AG04449 (cell line): ENCODE measurements at regions of chr10 and their contacts with region 1.

Region 1: GRCh38 chr10:96513698-96514561 is at the start of gene TLL2:
- DNase-seq: peak; percentile 26
- H3K4me3 ChIP-seq: peak within 1 kb of the TSS; percentile 61
- CTCF ChIP-seq: peak; percentile 76

Region 2: DNA sequence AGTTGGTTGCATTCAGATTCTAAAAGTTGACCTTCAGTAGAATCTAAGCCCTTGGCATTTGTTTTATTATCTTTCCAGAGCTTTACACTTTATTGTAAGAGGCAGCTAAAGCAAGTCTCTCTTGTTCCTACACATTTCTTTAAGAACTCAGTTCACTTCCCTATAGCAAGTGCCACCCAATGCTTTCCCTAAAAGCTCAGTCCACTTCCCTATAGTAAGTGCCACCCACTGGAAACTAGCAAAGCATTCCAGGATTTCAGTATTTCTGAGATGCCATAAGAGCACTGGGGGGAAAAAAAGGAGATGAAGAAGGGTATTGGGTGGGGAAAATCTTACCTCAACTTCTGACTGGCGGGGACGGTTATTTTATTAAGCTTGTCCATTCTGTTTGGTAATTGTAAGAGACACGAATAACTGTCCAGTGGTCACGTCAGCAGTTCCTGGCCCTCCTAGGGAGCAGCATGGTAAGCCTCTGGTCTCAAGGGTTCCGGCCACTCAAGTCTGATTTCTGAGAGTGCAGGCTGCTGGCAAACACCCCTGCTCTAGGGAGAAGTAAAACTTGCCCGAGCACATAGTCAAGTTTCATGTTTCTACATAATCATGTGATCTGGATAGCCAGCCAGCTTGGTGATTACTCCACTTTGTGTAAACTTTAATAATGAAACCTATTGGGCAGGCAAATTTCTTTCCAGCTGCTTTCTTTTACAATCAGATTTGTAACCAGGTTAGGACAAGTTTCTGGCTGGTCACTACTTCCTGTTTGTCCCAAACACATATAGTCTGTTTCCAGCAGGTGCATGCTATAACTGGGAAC is 242.7 kb before region 1 on chr10 and contains the start of gene BLNK:
- CTCF ChIA-PET with region 1: no interaction called
- POLR2A ChIA-PET with region 1: no interaction called
- DNase-seq: no peak
- H3K4me3 ChIP-seq: no peak within 1 kb of the TSS
- CTCF ChIP-seq: no peak

Region 3: GRCh38 chr10:96357038-96357620 is 156.8 kb before region 1 on chr10:
- CTCF ChIA-PET with region 1: no interaction called
- POLR2A ChIA-PET with region 1: no interaction called
- DNase-seq: no peak
- H3K4me3 ChIP-seq: no peak overlapping the region
- CTCF ChIP-seq: no peak

Region 4: DNA sequence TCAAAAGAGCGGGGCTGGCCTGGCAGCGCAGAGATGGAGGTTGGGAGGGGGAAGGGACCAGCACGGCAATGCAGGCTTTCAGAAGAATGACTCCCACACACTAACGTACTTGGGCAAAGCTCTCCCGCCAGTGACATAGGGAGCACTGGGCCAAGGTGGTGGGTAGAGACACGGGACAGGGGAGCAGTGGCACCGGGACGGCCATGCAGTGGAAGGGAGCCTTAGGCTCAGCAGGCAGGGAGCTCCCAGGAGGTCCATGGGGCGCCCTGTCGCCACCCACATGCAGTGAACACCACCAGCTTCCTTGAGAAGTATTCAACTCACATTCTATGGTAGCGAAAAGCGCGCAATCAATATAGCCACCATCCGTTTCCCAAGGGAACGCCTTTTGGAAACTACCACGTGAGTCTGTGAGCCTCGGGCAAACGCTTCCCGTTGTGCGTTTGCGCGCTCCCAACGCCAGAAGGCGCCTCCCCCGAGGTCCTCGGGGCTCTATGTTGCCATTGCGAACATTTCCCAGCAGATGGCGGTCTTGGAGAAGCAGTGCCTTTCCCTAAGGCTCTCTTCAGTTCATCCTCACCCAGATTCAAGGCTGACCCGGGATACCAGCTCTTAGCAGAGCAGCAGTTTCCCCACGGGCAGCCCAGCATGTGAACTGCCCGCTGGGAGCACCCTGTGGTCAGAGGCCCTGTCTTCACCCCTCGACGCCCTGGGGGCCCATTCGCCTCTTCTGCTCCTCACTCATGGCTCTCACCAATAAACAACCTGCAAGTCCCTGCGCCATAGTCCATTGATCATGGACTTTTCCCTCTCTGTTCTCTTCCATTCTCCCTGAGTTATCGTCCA is 138.7 kb before region 1 on chr10:
- CTCF ChIA-PET with region 1: interaction called, 253 read pairs
- POLR2A ChIA-PET with region 1: interaction called, 4 read pairs
- DNase-seq: no peak
- H3K4me3 ChIP-seq: peak overlapping the region; percentile 58
- CTCF ChIP-seq: peak; percentile 97

Region 5: DNA sequence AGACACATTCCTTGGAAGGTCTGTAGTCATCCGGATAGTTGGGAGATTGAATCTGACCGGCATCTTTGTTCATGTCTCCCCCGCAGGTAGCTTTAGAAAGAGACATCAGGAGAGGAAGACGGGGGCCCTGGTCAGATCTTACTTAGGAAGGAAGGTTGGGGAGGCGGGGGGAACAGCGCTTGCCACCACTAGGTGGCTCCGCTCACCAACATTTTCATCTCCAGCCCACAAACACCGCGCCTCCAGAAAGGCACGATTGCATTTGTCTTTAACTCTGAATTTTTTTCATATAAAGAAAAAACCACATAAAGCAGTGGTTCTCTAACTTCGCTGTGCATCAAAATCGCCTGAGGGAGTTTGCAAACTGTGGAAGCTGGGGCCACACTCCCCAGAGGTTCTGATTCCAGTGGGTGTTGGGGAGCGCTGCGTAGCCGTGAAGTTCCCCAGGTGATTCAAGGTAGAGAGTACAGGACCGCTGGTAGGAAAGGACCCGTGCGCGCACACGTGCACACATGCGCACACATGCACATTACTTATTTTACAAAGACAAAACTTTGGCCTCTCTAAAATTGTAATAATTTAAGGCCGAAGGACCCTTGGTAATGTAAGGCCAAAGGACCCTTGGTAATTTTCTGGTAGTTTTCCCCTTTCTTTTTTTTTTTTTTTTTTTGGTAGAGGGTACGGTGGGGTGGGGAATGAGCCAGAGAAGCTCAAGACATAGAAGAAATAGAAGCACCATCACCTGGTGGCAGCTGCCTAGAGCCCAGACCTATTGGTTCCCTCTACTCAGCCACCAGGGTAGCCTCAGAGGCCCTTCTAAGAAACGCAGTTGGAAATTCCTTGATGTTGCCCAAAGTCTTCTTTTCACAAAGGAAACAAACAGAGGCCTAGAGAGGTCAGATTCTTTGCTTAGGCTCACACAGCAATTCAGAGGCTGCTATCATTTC is 117.7 kb before region 1 on chr10:
- CTCF ChIA-PET with region 1: interaction called, 137 read pairs
- POLR2A ChIA-PET with region 1: no interaction called
- DNase-seq: no peak
- H3K4me3 ChIP-seq: no peak overlapping the region
- CTCF ChIP-seq: peak; percentile 82

Region 6: GRCh38 chr10:96496281-96496925 is 17.5 kb before region 1 on chr10:
- CTCF ChIA-PET with region 1: interaction called, 45 read pairs
- POLR2A ChIA-PET with region 1: interaction called, 3 read pairs
- DNase-seq: no peak
- H3K4me3 ChIP-seq: no peak overlapping the region
- CTCF ChIP-seq: no peak

Region 7: DNA sequence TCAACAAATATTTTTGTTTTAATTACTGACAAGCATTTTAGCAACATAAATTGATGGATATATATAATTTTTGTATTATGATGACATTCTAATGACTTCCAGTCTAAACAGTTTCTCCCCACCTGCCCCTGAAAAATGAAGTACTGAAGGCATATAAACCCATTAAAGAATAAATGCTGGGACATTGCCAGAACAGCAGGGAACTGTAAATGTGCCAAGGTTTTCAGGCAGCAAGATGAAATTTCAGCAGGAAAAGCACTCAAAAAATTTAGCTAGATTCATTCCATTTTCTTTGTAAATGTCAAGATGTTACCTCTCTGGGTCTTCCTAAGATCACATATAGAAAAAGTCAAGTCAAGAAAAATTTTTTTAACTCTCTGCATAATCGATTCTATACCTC is 10.8 kb after region 1 on chr10:
- CTCF ChIA-PET with region 1: interaction called, 79 read pairs
- POLR2A ChIA-PET with region 1: interaction called, 3 read pairs
- DNase-seq: no peak
- H3K4me3 ChIP-seq: no peak overlapping the region
- CTCF ChIP-seq: no peak

Region 8: GRCh38 chr10:96548589-96548988 is 34.7 kb after region 1 on chr10:
- CTCF ChIA-PET with region 1: interaction called, 15 read pairs
- POLR2A ChIA-PET with region 1: no interaction called
- DNase-seq: no peak
- H3K4me3 ChIP-seq: no peak overlapping the region
- CTCF ChIP-seq: no peak